ENCODE measurements at regions of chr12 and their contacts with region 1.

Region 1: GRCh38 chr12:7806863-7807487 is 17.8 kb downstream of the NANOG start:
- DNase-seq: peak; percentile 61
- ATAC-seq: peak; percentile 95
- H3K4me3 ChIP-seq: no peak overlapping the region
- H3K27ac ChIP-seq: no peak overlapping the region
- H3K4me1 ChIP-seq: peaks cover 9 to 11% of the 10 kb centered on the region in 2 experiments; a peak in 3 of 4 replicates
- H3K27me3 ChIP-seq: no peaks in the 10 kb centered on the region
- CTCF ChIP-seq: peak; percentile 86 to 95 (median 93)
- POLR2A ChIP-seq: no peak
- RAD21 ChIP-seq: peak; percentile 84

Region 2: GRCh38 chr12:7219599-7220243 is 587.3 kb before region 1 on chr12:
- CTCF ChIA-PET with region 1: no interaction called
- POLR2A ChIA-PET with region 1: no interaction called
- RAD21 ChIA-PET with region 1: no interaction called
- intact Hi-C with region 1: loop called (anchors 5 kb)
- DNase-seq: peak; percentile 75
- ATAC-seq: peak; percentile 82
- H3K4me3 ChIP-seq: no peak overlapping the region
- H3K27ac ChIP-seq: no peak overlapping the region
- H3K4me1 ChIP-seq: no peaks in the 10 kb centered on the region; a peak in 1 of 4 replicates
- H3K27me3 ChIP-seq: no peaks in the 10 kb centered on the region
- CTCF ChIP-seq: peak; percentile 82 to 95 (median 93)
- POLR2A ChIP-seq: no peak
- RAD21 ChIP-seq: peak; percentile 98

Region 3: DNA sequence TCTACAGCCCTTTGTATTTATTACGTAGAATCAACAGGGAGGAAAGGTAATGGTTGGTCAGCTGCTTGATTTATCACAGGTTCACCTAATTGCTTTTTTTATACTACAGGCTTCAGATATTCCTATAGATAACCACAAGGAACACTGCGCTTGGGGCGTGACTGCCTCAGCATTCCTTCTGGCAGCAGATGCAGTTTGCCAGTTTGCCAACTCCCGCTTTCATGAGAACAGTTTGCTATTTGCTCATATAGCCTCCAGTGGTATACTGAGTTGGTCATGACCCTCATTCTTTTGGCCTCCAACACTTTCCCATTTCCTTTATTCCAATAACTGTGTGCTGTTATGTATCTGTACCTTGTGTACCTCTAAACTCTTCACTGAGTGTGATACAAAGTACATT is 541.7 kb before region 1 on chr12:
- CTCF ChIA-PET with region 1: no interaction called
- POLR2A ChIA-PET with region 1: no interaction called
- RAD21 ChIA-PET with region 1: no interaction called
- intact Hi-C with region 1: no loop called
- DNase-seq: no peak
- ATAC-seq: no peak
- H3K4me3 ChIP-seq: no peak overlapping the region
- H3K27ac ChIP-seq: no peak overlapping the region
- H3K4me1 ChIP-seq: no peaks in the 10 kb centered on the region
- H3K27me3 ChIP-seq: no peaks in the 10 kb centered on the region
- CTCF ChIP-seq: no peak
- POLR2A ChIP-seq: no peak
- RAD21 ChIP-seq: no peak

Region 4: GRCh38 chr12:7678738-7679137 is 128.2 kb before region 1 on chr12:
- CTCF ChIA-PET with region 1: interaction called, 19 read pairs
- POLR2A ChIA-PET with region 1: no interaction called
- RAD21 ChIA-PET with region 1: interaction called in 1 of 2 experiments, 4 read pairs
- intact Hi-C with region 1: loop called (anchors 1 kb)
- DNase-seq: no peak
- ATAC-seq: peak; percentile 65
- H3K4me3 ChIP-seq: no peak overlapping the region
- H3K27ac ChIP-seq: no peak overlapping the region
- H3K4me1 ChIP-seq: peaks cover 0 to 5% of the 10 kb centered on the region in 2 experiments; a peak in 1 of 4 replicates
- H3K27me3 ChIP-seq: no peaks in the 10 kb centered on the region
- CTCF ChIP-seq: no peak
- POLR2A ChIP-seq: no peak
- RAD21 ChIP-seq: no peak

Region 5: GRCh38 chr12:7716381-7716780 is 90.6 kb before region 1 on chr12:
- CTCF ChIA-PET with region 1: interaction called, 20 read pairs
- POLR2A ChIA-PET with region 1: no interaction called
- RAD21 ChIA-PET with region 1: interaction called, 3 read pairs
- intact Hi-C with region 1: loop called (anchors 5 kb)
- DNase-seq: peak; percentile 19
- ATAC-seq: peak; percentile 89
- H3K4me3 ChIP-seq: no peak overlapping the region
- H3K27ac ChIP-seq: no peak overlapping the region
- H3K4me1 ChIP-seq: no peaks in the 10 kb centered on the region
- H3K27me3 ChIP-seq: no peaks in the 10 kb centered on the region
- CTCF ChIP-seq: peak; percentile 26 to 45 (median 40); a peak in 3 of 6 replicates
- POLR2A ChIP-seq: no peak
- RAD21 ChIP-seq: peak; percentile 56

Region 6: GRCh38 chr12:7915559-7916403 is 108.8 kb after region 1 on chr12:
- CTCF ChIA-PET with region 1: no interaction called
- POLR2A ChIA-PET with region 1: no interaction called
- RAD21 ChIA-PET with region 1: no interaction called
- intact Hi-C with region 1: no loop called
- DNase-seq: no peak
- ATAC-seq: no peak
- H3K4me3 ChIP-seq: no peak overlapping the region
- H3K27ac ChIP-seq: no peak overlapping the region
- H3K4me1 ChIP-seq: no peaks in the 10 kb centered on the region
- H3K27me3 ChIP-seq: no peaks in the 10 kb centered on the region
- CTCF ChIP-seq: no peak
- POLR2A ChIP-seq: no peak
- RAD21 ChIP-seq: no peak